Sigmoid colon (tissue), 7 donors: ENCODE measurements at regions of chr2 and their contacts with region 1.

Region 1: DNA sequence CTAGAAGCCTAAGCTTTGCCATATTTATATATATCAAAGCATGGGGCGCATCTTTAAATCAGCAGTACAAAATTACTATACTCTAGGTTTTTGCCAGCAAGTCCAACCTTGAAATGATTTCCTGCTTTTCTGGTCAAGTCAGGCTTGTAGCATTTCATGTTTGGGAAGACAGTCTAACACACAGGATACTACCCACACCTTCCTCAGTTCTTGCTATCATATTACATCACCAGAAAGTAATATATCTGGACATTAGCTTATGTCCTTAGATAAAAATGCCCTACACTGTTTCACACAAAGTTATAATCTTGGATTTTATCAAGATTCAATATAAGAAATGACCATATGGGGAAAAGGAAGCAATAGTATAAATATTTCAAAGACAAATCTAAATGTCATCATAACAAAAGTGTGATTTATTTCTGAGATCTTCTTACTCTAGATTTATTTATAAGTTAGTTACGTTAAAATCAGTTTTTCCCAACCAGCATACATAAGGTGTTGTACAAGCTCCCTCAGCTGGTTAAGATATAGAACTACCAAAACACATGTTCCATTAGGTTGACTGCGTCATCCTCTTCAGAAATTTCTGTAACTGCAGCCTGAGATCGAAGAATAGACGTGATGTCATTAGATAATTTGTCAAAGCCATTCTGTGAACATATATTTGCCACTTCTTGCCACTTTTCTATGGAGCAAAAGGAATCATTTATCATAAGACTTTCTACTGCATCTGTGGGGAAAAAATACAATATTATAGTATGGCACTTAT is 56.7 kb downstream of the CLHC1 start:
- DNase-seq: no peak
- H3K4me3 ChIP-seq: no peak overlapping the region
- H3K27ac ChIP-seq: no peak overlapping the region
- H3K4me1 ChIP-seq: peaks cover 0 to 12% (median 5%) of the 10 kb centered on the region in 4 donors
- H3K27me3 ChIP-seq: no peaks in the 10 kb centered on the region
- CTCF ChIP-seq: peak; percentile 51 to 64 (median 56)
- EP300 ChIP-seq: no peak
- POLR2A ChIP-seq: no peak

Region 2: DNA sequence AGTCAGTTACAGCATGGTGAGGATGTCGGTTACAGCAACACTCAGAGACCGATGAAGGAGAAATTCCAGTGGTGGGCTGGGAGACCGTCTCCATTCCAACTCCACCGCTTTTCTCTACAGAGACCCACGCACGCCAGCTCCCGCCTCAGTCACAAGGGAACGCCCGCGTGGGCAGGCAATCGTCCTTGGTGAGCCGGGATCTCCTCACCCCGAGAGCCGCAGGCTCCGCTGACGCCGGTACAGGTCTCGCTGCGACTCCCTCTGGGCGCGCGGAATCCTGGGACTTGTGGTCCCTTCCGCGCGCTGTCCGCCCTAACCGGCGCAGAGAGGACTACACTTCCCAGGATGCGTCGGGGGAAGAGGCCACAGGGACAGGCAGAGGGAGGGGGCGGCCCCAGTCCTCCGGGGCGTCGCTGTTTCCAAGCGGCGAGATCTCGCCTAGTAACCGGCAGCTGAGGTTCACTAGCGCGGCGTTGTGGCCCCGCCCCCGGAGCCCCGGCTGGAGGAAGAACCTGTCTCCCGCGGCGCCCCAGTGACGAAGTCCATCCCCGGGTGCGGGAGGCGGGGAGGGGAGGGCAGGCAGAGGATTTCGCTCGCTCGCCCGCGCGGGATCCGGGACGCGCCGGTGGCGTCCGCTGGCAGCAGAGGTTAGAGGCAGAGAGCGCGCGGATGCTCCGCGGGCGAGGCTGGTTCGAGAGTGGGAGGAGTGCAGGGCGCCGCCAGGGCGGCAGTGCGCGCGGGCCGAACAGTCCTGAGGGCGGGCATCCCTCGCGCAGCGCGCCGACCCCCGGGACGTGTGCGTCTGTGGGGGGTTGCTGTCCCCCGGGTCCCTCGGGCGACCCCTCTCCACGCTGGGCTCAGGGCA is 452.1 kb before region 1 on chr2 and contains the start of gene EML6:
- intact Hi-C with region 1: loop called (anchors 10 kb)
- DNase-seq: peak; percentile 99
- H3K4me3 ChIP-seq: peak within 1 kb of the TSS; percentile 66 to 82 (median 70)
- H3K27ac ChIP-seq: peak within 1 kb of the TSS; percentile 78 to 83 (median 80)
- H3K4me1 ChIP-seq: peaks cover 0 to 22% (median 18%) of the 10 kb centered on the region in 4 donors
- H3K27me3 ChIP-seq: peaks cover 0 to 8% (median 0%) of the 10 kb centered on the region in 3 donors
- CTCF ChIP-seq: peak in 1 of 4 experiments; percentile 32
- EP300 ChIP-seq: no peak
- POLR2A ChIP-seq: peak in 1 of 2 donors; percentile 26
- total RNA-seq, gene EML6: 0.66 to 1.9 (median 1.2) TPM

Region 3: GRCh38 chr2:54838585-54839035 is 336.8 kb before region 1 on chr2:
- intact Hi-C with region 1: loop called (anchors 5 kb)
- DNase-seq: peak; percentile 81
- H3K4me3 ChIP-seq: no peak overlapping the region
- H3K27ac ChIP-seq: no peak overlapping the region
- H3K4me1 ChIP-seq: no peaks in the 10 kb centered on the region
- H3K27me3 ChIP-seq: no peaks in the 10 kb centered on the region
- CTCF ChIP-seq: peak; percentile 35 to 92 (median 76)
- EP300 ChIP-seq: no peak
- POLR2A ChIP-seq: no peak

Region 4: DNA sequence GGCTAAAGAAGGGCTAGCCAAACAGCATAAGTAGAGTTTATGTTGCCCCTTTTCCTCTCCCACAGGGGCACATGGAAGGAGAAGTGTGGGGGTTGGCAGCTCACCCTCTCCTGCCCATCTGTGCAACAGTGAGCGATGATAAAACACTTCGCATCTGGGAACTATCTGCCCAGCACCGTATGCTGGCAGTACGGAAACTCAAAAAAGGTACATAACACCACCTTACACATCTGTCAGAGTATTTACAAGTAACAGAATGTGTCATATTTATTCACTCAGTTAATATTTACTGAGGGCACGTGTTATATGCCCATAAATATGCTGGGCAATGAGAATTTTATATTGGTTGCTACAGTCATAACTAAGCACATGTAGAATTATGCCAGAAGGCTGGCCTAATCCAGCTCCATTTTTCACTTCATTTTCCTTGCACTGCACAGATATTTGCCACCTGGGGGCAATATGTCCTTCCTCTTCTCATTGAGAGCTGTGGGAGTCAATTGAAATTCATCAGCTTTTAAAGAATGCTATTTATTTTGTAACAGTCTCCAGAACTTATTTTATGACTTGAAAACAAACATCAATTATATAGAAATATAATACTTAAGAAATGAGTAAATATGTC is 275.8 kb before region 1 on chr2:
- intact Hi-C with region 1: loop called (anchors 5 kb)
- DNase-seq: no peak
- H3K4me3 ChIP-seq: no peak overlapping the region
- H3K27ac ChIP-seq: no peak overlapping the region
- H3K4me1 ChIP-seq: no peaks in the 10 kb centered on the region
- H3K27me3 ChIP-seq: no peaks in the 10 kb centered on the region
- CTCF ChIP-seq: peak in 2 of 4 experiments; percentile 44 to 47
- EP300 ChIP-seq: no peak
- POLR2A ChIP-seq: no peak

Region 5: DNA sequence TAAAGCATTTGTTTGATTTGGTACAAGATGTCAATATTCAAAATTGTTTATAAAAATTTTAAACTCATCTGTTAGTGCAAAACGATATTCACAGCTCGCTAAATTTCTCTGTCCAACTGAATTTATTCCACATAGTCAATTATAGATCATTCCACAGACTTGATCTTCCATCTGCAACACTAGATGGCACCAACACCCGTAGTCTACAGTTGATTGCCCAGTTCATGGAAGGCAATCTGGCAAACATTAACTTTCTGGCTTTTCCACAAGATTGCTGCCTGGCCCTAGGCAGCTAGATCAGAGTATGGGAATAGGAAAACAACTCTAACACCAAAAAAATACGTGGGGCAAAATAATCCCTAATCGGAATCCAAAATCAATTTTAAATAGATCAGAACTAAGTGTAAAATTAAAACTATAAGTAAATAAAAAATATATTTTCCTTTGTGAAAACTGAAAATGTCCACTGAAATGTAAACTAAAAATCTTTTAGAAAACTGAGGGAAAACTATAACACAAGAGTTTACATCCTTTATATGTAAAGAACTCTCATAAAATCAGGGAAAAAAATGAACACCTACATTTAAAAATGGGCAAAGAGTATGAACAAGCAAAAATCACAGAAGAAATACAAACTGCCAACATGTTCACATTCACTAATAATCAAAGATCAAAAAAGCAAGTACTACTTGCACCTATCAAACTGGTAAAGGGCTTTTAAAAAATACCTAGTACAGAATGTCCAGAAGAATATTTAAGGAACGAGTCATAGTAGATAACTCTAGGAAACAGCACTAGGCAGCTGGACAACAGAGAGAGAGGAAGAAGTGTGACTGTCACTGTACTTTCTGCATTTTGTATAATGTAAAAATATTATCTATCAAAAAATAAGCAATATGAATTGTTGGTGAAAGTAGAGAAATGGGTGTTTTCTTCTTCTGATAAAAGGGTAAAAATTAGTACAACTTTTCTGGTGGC is 160.2 kb before region 1 on chr2:
- intact Hi-C with region 1: loop called (anchors 2 kb)
- DNase-seq: peak; percentile 69
- H3K4me3 ChIP-seq: no peak overlapping the region
- H3K27ac ChIP-seq: peak overlapping the region in 3 of 4 donors; percentile 8 to 42 (median 40)
- H3K4me1 ChIP-seq: peaks cover 0 to 81% (median 65%) of the 10 kb centered on the region in 4 donors
- H3K27me3 ChIP-seq: no peaks in the 10 kb centered on the region
- CTCF ChIP-seq: peak; percentile 57 to 62 (median 61)
- EP300 ChIP-seq: no peak
- POLR2A ChIP-seq: no peak

Region 6: DNA sequence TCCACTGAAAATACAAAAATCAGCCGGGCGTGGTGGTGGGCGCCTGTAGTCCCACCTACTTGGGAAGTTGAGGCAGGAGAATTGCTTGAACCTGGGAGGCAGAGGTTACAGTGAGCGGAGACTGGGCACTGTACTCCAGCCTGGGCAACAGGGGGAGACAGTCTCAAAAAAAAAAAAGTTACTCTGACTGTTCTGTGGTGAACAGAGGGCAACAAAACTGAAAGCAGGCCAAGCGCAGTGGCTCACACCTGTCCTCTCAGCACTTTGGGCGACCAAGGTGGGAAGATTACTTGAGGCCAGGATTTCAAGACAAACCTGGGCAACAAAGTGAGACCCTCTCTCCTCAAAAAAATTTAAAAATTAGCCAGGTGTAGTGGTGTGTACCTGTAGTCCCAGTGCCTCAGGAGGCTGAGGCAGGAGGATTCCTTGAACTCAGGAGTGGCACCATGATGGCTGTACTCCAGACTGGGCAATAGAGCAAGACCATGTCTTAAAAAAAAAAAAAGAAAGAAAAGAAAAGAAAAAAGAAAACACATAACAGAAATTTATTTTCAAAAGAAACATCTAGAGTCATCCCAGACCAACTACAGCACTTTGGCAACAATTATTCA is 111.6 kb before region 1 on chr2:
- intact Hi-C with region 1: no loop called
- DNase-seq: no peak
- H3K4me3 ChIP-seq: no peak overlapping the region
- H3K27ac ChIP-seq: no peak overlapping the region
- H3K4me1 ChIP-seq: no peaks in the 10 kb centered on the region
- H3K27me3 ChIP-seq: no peaks in the 10 kb centered on the region
- CTCF ChIP-seq: no peak
- EP300 ChIP-seq: no peak
- POLR2A ChIP-seq: no peak